Right ventricle myocardium superior (tissue), 1 donor: ENCODE measurements at regions of chr10 and their contacts with region 1.

Region 1: DNA sequence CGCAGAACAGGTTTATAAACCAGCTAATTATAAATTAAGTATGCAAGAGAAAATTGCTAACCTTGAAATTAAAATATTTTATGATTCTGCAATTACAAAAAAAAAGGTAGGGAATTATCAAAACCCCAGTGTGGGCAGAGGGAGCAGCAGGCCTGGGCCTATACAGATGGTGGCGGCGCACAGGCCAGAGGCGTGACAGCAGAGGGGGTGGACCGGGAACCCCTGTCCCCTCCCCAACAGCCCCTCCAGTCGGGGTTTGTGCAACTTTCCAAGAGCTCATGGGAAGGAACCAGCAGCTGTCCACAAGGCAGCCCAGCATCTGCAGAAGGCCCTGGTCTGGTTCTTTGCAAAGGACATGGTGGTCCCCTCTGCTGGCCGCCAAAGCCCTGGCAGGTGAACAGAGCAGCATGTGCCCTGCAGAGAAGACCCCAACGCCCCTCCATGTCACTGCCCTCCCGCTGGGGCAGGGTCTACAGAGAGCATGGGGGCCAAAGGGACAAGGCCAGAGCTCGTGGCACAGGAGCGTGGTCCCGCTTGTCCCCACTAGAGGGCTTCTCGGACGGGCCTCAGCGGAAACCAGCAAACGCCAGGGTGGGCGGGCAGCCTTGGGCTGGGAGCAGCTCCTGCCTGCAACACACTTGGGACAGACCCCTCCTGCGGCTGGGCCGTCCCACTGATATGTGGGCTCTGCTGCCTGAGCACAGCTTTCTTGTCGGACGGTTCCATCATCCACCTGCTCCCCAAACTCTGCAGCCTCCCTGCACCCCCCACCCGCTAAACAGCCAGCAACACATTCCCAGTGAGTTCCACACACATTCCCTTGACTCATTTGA is 75.1 kb downstream of the EBF3 start:
- DNase-seq: peak; percentile 78
- ATAC-seq: peak; percentile 71

Region 2: GRCh38 chr10:129855836-129856563 is 33.0 kb before region 1 on chr10:
- intact Hi-C with region 1: loop called (anchors 2 kb)
- DNase-seq: no peak
- ATAC-seq: no peak

Region 3: GRCh38 chr10:129939416-129940275 is 50.6 kb after region 1 on chr10:
- intact Hi-C with region 1: loop called (anchors 2 kb)
- DNase-seq: peak; percentile 11
- ATAC-seq: no peak

Region 4: GRCh38 chr10:129971381-129972144 is 82.6 kb after region 1 on chr10:
- intact Hi-C with region 1: loop called (anchors 5 kb)
- DNase-seq: peak; percentile 78
- ATAC-seq: peak; percentile 94

Region 5: GRCh38 chr10:130243015-130243414 is 354.0 kb after region 1 on chr10:
- intact Hi-C with region 1: no loop called
- DNase-seq: no peak
- ATAC-seq: no peak